ENCODE measurements at regions of chr18 and their contacts with region 1.

Region 1: GRCh38 chr18:32769693-32770665 is 2.8 kb downstream of the KLHL14 start:
- DNase-seq: peak; percentile 54
- ATAC-seq: peak; percentile 31

Region 2: GRCh38 chr18:32724071-32724696 is 45.8 kb before region 1 on chr18:
- intact Hi-C with region 1: no loop called
- DNase-seq: no peak
- ATAC-seq: no peak

Region 3: GRCh38 chr18:32802606-32803451 is 32.9 kb after region 1 on chr18:
- intact Hi-C with region 1: loop called (anchors 1 kb)
- DNase-seq: no peak
- ATAC-seq: no peak

Region 4: GRCh38 chr18:32815881-32816280 is 45.9 kb after region 1 on chr18:
- intact Hi-C with region 1: no loop called
- DNase-seq: no peak
- ATAC-seq: no peak